Mammary epithelial cell (primary cell): ENCODE measurements at regions of chr12 and their contacts with region 1.

Region 1: DNA sequence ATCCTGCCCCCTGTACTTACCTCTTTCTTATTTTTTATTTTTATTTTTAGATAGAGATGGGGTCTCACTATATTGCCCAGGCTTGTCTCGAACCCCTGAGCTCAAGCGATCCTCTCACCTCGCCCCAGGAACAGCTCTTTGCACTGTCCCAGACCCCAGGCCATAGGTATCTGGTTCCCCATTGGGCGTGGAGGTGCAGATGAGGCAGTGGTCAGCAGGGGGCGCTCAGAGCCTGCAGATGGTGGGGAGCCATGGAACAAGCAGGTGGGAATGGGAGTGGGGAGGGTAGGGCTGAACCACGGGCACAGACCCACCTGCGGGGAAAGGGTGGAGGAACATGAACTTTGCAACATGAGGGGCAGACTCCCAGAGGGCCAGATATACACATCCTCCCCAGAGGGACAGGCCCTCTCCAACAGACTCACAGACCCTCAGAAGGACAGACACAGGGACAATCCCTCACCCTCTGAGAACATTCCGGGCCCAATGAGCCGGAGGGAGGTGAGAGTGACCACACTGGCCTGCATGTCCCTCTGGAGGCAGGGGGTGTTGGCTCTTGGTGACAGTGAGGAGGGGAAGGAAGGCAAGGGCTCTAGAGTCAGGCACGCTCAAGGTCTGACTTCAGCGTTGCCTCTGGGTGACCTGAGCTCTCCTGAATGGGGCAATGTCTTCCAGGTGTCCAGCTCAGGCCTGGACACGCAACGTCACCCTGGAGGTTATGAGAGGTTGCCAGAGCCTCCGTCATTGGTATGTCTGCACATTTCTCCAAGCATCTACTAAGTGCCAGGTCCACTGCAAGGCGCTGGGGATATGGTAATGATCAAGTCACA is 34.9 kb downstream of the KRT80 start:
- DNase-seq: peak; percentile 80
- H3K4me3 ChIP-seq: no peak overlapping the region
- H3K27ac ChIP-seq: peak overlapping the region; percentile 96
- H3K4me1 ChIP-seq: peaks cover 46% of the 10 kb centered on the region
- H3K27me3 ChIP-seq: no peaks in the 10 kb centered on the region
- CTCF ChIP-seq: peak; percentile 90 to 98

Region 2: GRCh38 chr12:52139552-52140062 is 17.3 kb before region 1 on chr12:
- CTCF ChIA-PET with region 1: no interaction called
- dilution Hi-C with region 1: no loop called
- in situ Hi-C with region 1: no loop called
- intact Hi-C with region 1: loop called (anchors 2 kb)
- DNase-seq: peak; percentile 53
- H3K4me3 ChIP-seq: no peak overlapping the region
- H3K27ac ChIP-seq: no peak overlapping the region
- H3K4me1 ChIP-seq: peaks cover 15% of the 10 kb centered on the region
- H3K27me3 ChIP-seq: no peaks in the 10 kb centered on the region
- CTCF ChIP-seq: peak; percentile 98

Region 3: GRCh38 chr12:52278541-52279421 is 121.8 kb after region 1 on chr12:
- CTCF ChIA-PET with region 1: interaction called, 7 read pairs
- dilution Hi-C with region 1: no loop called
- in situ Hi-C with region 1: no loop called
- intact Hi-C with region 1: loop called (anchors 2 kb)
- DNase-seq: peak; percentile 73
- H3K4me3 ChIP-seq: peak overlapping the region in 1 of 3 experiments; percentile 20
- H3K27ac ChIP-seq: peak overlapping the region; percentile 100
- H3K4me1 ChIP-seq: peaks cover 45% of the 10 kb centered on the region
- H3K27me3 ChIP-seq: no peaks in the 10 kb centered on the region
- CTCF ChIP-seq: peak; percentile 76 to 100

Region 4: DNA sequence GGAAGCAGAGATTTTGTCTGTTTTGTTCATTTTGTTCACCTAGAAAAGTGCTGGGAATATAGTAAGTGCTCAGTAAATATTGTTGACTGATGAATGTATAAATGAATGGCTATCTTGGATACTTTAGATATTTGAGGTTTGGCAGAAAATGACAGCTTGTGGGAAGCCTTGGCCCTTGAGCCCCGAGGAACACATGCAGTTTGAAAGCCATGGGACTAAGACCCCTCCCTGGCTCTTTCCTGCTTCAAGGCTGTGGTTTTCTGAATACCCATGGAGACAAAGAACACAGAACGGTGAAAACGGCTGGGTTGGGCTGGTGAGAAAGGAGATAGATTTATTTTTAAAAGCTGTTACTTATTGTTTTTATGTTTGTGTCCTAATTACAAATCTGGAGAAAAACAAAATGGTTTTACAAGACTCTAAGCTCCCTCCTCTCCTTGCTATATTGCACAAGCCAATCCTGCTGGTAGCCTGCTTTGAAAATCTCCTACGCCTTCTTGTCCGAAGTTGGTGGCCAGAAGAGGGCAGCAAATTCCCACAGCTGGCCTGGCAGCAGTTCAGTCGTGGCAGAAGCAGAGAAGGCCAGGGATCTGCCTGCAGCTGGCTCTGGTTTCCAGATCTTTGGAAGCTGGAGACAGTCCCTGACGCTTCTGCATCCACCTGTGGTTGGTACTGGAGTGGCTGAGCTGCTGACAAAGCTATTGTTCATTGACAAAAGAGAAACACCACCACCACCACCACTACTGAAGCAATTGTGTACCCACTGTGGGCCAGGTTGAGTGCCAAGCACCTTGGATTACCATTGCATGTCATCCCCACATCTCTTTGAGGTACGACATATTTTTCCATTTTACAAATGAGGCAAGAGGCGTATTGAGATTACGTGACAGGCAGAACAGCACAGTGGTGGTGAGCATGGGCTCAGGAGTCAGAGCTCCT is 215.5 kb after region 1 on chr12:
- CTCF ChIA-PET with region 1: interaction called, 5 read pairs
- dilution Hi-C with region 1: no loop called
- in situ Hi-C with region 1: no loop called
- intact Hi-C with region 1: loop called (anchors 1 kb)
- DNase-seq: peak; percentile 81
- H3K4me3 ChIP-seq: no peak overlapping the region
- H3K27ac ChIP-seq: no peak overlapping the region
- H3K4me1 ChIP-seq: peaks cover 3% of the 10 kb centered on the region
- H3K27me3 ChIP-seq: no peaks in the 10 kb centered on the region
- CTCF ChIP-seq: peak; percentile 86 to 93

Region 5: DNA sequence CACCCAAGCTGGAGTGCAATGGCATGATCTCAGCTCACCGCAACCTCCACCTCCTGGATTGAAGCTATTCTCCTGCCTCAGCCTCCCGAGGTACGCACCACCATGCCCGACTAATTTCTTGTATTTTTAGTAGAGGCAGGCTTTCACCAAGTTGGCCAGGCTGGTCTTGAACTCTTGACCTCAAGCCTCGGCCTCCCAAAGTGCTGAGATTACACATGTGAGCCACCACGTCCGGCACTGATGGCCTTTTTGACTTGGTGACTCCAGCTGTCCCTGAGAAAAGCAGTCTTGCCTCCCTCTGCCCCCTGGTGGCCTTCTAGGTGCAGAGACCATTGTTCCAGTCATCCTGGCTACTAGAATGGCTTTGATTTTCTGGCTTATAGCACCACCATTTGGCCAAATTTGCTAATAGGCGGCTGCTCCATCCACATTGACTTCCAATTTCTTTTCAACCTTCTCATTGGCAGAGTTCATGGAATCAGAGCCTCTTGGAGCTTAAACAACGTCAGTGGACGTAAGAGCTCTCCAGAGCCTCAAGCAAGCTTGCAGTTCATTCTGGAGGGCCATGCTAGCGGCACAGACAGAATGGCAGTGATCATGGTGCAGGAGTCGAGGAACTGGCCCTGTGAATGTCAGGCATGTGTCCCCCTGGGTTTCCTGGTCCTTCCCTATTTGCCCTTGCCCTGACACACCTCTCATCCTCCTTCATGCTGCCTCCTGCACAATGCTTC is 823.9 kb after region 1 on chr12:
- CTCF ChIA-PET with region 1: no interaction called
- dilution Hi-C with region 1: no loop called
- in situ Hi-C with region 1: loop called in 1 of 2 experiments (anchors 5 kb)
- intact Hi-C with region 1: loop called (anchors 5 kb)
- DNase-seq: peak; percentile 80
- H3K4me3 ChIP-seq: no peak overlapping the region
- H3K27ac ChIP-seq: no peak overlapping the region
- H3K4me1 ChIP-seq: no peaks in the 10 kb centered on the region
- H3K27me3 ChIP-seq: no peaks in the 10 kb centered on the region
- CTCF ChIP-seq: peak; percentile 99